B cell (primary cell): ENCODE measurements at regions of chr1 and their contacts with region 1.

Region 1: GRCh38 chr1:1059494-1060280 is 14.4 kb downstream of the RNF223 start:
- DNase-seq: peak; percentile 92
- ATAC-seq: peak; percentile 65
- H3K4me3 ChIP-seq: peak overlapping the region in 4 of 5 experiments; percentile 40 to 60 (median 51)
- H3K4me3 Mint-ChIP-seq: peak overlapping the region; percentile 76
- H3K27ac ChIP-seq: no peak overlapping the region
- H3K27ac Mint-ChIP-seq: no peak overlapping the region
- H3K4me1 ChIP-seq: peaks cover 38 to 44% of the 10 kb centered on the region in 2 donors
- H3K4me1 Mint-ChIP-seq: peaks cover 22% of the 10 kb centered on the region
- H3K27me3 ChIP-seq: peaks cover 0 to 62% (median 30%) of the 10 kb centered on the region in 4 experiments
- H3K27me3 Mint-ChIP-seq: peaks cover 7% of the 10 kb centered on the region
- CTCF ChIP-seq: peak; percentile 9

Region 2: DNA sequence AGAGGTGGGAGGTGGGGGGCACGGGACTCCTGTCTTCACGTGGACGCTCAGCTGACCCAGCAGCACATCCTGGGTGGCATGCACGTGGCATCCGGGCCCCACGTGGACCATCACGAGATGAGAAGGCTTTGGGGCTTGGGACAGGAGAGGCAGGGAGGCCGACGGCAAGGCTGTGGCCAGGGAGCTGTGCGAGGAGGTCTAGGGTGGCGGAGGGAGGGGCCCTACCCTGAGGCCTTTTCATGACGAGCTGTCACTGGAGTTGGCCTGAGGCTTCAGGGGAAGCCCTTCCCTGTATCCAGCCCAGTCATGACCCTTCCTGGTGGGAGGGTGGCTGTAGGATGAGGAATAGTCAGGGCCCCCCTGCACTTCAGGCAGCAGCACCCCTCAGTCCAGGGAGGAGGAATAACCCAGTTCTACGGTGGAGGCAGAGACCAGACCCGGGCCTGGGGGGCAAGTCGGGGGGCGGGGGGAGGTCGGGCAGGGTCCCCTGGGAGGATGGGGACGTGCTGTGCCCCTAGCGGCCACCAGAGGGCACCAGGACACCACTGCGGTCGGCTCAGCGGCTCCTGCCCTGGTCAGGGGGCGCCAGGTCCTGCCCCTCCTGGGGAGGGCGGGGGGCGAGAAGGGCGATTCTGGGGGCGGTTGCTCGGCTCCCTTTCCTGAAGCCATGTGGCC is 75.8 kb before region 1 on chr1:
- CTCF ChIA-PET with region 1: interaction called, 27 read pairs
- POLR2A ChIA-PET with region 1: interaction called, 5 read pairs
- intact Hi-C with region 1: no loop called
- DNase-seq: peak; percentile 73
- ATAC-seq: peak; percentile 95
- H3K4me3 ChIP-seq: no peak overlapping the region
- H3K4me3 Mint-ChIP-seq: no peak overlapping the region
- H3K27ac ChIP-seq: no peak overlapping the region
- H3K27ac Mint-ChIP-seq: no peak overlapping the region
- H3K4me1 ChIP-seq: peaks cover 0 to 3% of the 10 kb centered on the region in 2 donors
- H3K4me1 Mint-ChIP-seq: no peaks in the 10 kb centered on the region
- H3K27me3 ChIP-seq: peaks cover 0 to 22% (median 0%) of the 10 kb centered on the region in 4 experiments
- H3K27me3 Mint-ChIP-seq: peaks cover 38% of the 10 kb centered on the region
- CTCF ChIP-seq: peak; percentile 90

Region 3: GRCh38 chr1:1019122-1019999 is 40.3 kb before region 1 on chr1:
- CTCF ChIA-PET with region 1: interaction called, 6 read pairs
- POLR2A ChIA-PET with region 1: no interaction called
- intact Hi-C with region 1: loop called (anchors 10 kb)
- DNase-seq: peak; percentile 89
- ATAC-seq: peak; percentile 91
- H3K4me3 ChIP-seq: peak overlapping the region in 4 of 5 experiments; percentile 13 to 53 (median 44)
- H3K4me3 Mint-ChIP-seq: peak overlapping the region; percentile 73
- H3K27ac ChIP-seq: no peak overlapping the region
- H3K27ac Mint-ChIP-seq: peak overlapping the region; percentile 67
- H3K4me1 ChIP-seq: peaks cover 10 to 28% of the 10 kb centered on the region in 2 donors
- H3K4me1 Mint-ChIP-seq: peaks cover 9% of the 10 kb centered on the region
- H3K27me3 ChIP-seq: peaks cover 0 to 20% (median 6%) of the 10 kb centered on the region in 4 experiments
- H3K27me3 Mint-ChIP-seq: no peaks in the 10 kb centered on the region
- CTCF ChIP-seq: peak; percentile 47

Region 4: GRCh38 chr1:1040004-1040991 is 19.4 kb before region 1 on chr1:
- CTCF ChIA-PET with region 1: interaction called, 29 read pairs
- POLR2A ChIA-PET with region 1: interaction called, 6 read pairs
- intact Hi-C with region 1: no loop called
- DNase-seq: peak; percentile 86
- ATAC-seq: peak; percentile 80
- H3K4me3 ChIP-seq: peak overlapping the region in 4 of 5 experiments; percentile 26 to 56 (median 50)
- H3K4me3 Mint-ChIP-seq: peak overlapping the region; percentile 82
- H3K27ac ChIP-seq: no peak overlapping the region
- H3K27ac Mint-ChIP-seq: peak overlapping the region; percentile 50
- H3K4me1 ChIP-seq: peaks cover 25 to 27% of the 10 kb centered on the region in 2 donors
- H3K4me1 Mint-ChIP-seq: peaks cover 32% of the 10 kb centered on the region
- H3K27me3 ChIP-seq: peaks cover 0 to 35% (median 10%) of the 10 kb centered on the region in 4 experiments
- H3K27me3 Mint-ChIP-seq: peaks cover 21% of the 10 kb centered on the region
- CTCF ChIP-seq: no peak

Region 5: GRCh38 chr1:1291548-1292441 is 232.1 kb after region 1 on chr1:
- CTCF ChIA-PET with region 1: interaction called, 14 read pairs
- POLR2A ChIA-PET with region 1: no interaction called
- intact Hi-C with region 1: no loop called
- DNase-seq: peak; percentile 87
- ATAC-seq: peak; percentile 84
- H3K4me3 ChIP-seq: no peak overlapping the region
- H3K4me3 Mint-ChIP-seq: no peak overlapping the region
- H3K27ac ChIP-seq: no peak overlapping the region
- H3K27ac Mint-ChIP-seq: peak overlapping the region; percentile 50
- H3K4me1 ChIP-seq: peaks cover 0 to 16% of the 10 kb centered on the region in 2 donors
- H3K4me1 Mint-ChIP-seq: peaks cover 11% of the 10 kb centered on the region
- H3K27me3 ChIP-seq: no peaks in the 10 kb centered on the region
- H3K27me3 Mint-ChIP-seq: no peaks in the 10 kb centered on the region
- CTCF ChIP-seq: peak; percentile 74